Right ventricle myocardium superior (tissue), 1 donor: ENCODE measurements at regions of chr1 and their contacts with region 1.

Region 1: DNA sequence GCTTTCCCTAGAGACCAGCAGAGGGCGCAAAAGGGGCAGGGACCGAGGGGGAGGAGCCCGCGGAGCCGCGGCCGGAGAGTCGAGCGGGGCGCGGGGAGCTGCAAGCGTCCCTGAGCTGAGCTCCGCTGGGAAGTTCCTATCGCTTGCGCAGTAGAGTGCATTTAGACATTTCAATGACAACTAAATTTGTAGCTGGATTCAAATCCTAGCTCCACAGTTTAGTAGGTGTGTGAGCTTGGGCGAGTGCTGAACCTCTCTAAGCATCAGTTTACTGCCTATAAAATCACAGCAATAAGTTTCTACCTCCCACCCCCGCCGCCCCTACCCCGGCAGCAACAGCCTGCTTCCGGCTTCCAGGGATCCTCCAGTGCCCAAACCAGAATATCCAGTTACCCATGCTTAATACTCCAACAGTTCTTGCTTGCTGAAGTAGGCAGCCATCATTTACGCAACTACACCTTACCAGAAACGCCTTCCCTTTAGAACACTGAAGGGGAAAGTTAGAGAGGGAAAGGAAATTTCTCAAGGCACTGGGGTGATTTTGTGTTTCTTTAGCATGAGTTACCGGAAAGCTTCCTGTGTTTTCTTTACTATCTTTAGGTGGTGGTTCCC is 9.1 kb downstream of the TLR5 start:
- DNase-seq: peak; percentile 90
- ATAC-seq: peak; percentile 91

Region 2: GRCh38 chr1:223244366-223245103 is 110.6 kb after region 1 on chr1:
- intact Hi-C with region 1: loop called (anchors 10 kb)
- DNase-seq: no peak
- ATAC-seq: no peak

Region 3: GRCh38 chr1:223683586-223684487 is 549.9 kb after region 1 on chr1:
- intact Hi-C with region 1: loop called (anchors 5 kb)
- DNase-seq: peak; percentile 49
- ATAC-seq: peak; percentile 59